ENCODE measurements at regions of chr5 and their contacts with region 1.

Region 1: GRCh38 chr5:40688127-40688761 is 8.5 kb downstream of the PTGER4 start:
- DNase-seq: peak; percentile 82
- H3K4me3 ChIP-seq: no peak overlapping the region
- H3K27ac ChIP-seq: no peak overlapping the region
- H3K4me1 ChIP-seq: peaks cover 10% of the 10 kb centered on the region
- H3K27me3 ChIP-seq: no peaks in the 10 kb centered on the region
- CTCF ChIP-seq: peak; percentile 70 to 95 (median 86)
- POLR2A ChIP-seq: no peak

Region 2: GRCh38 chr5:39578887-39579497 is 1109.3 kb before region 1 on chr5:
- intact Hi-C with region 1: loop called (anchors 5 kb)
- DNase-seq: no peak
- H3K4me3 ChIP-seq: no peak overlapping the region
- H3K27ac ChIP-seq: no peak overlapping the region
- H3K4me1 ChIP-seq: no peaks in the 10 kb centered on the region
- H3K27me3 ChIP-seq: no peaks in the 10 kb centered on the region
- CTCF ChIP-seq: peak; percentile 51 to 69 (median 57)
- POLR2A ChIP-seq: no peak

Region 3: GRCh38 chr5:39714036-39714698 is 974.1 kb before region 1 on chr5:
- intact Hi-C with region 1: loop called (anchors 5 kb)
- DNase-seq: peak; percentile 32
- H3K4me3 ChIP-seq: no peak overlapping the region
- H3K27ac ChIP-seq: no peak overlapping the region
- H3K4me1 ChIP-seq: no peaks in the 10 kb centered on the region
- H3K27me3 ChIP-seq: no peaks in the 10 kb centered on the region
- CTCF ChIP-seq: peak in 3 of 4 experiments; percentile 38 to 63 (median 51)
- POLR2A ChIP-seq: no peak

Region 4: DNA sequence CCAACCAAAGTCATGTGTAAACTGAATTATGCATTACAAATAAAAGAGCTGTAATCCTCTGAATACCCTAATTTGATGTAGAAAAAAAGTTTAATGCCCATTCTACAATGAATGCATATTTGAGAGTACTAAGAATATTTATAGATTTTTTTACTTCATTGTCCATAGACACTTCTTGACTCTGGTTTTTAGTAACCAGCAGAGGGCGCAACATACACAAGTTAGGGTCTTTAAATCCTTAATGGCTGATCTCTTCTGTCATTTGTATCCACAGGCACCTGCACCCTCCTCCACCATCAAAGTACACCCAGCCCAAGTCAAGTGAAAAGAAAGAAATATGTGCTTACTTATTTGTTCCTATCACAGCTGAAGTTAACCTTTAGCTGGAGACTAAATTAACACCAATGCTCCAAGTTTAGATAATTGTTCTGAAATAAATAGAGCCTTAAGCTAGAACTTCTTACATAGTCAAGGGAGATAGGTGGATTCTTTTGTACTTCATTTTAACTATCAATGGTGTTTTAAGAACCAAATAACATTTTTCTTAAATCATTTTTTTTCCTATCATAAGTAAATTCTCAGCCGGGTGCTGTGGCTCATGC is 739.3 kb before region 1 on chr5:
- intact Hi-C with region 1: loop called (anchors 5 kb)
- DNase-seq: peak; percentile 63
- H3K4me3 ChIP-seq: no peak overlapping the region
- H3K27ac ChIP-seq: no peak overlapping the region
- H3K4me1 ChIP-seq: no peaks in the 10 kb centered on the region
- H3K27me3 ChIP-seq: no peaks in the 10 kb centered on the region
- CTCF ChIP-seq: peak; percentile 57 to 81 (median 70)
- POLR2A ChIP-seq: no peak

Region 5: GRCh38 chr5:40404613-40405012 is 283.6 kb before region 1 on chr5:
- intact Hi-C with region 1: no loop called
- DNase-seq: no peak
- H3K4me3 ChIP-seq: no peak overlapping the region
- H3K27ac ChIP-seq: no peak overlapping the region
- H3K4me1 ChIP-seq: no peaks in the 10 kb centered on the region
- H3K27me3 ChIP-seq: no peaks in the 10 kb centered on the region
- CTCF ChIP-seq: no peak
- POLR2A ChIP-seq: no peak

Region 6: GRCh38 chr5:40746703-40747102 is 58.5 kb after region 1 on chr5:
- intact Hi-C with region 1: no loop called
- DNase-seq: no peak
- H3K4me3 ChIP-seq: no peak overlapping the region
- H3K27ac ChIP-seq: no peak overlapping the region
- H3K4me1 ChIP-seq: no peaks in the 10 kb centered on the region
- H3K27me3 ChIP-seq: no peaks in the 10 kb centered on the region
- CTCF ChIP-seq: no peak
- POLR2A ChIP-seq: no peak

Measured in prostate gland (tissue), 2 donors.